ENCODE measurements at regions of chr12 and their contacts with region 1.

Region 1: DNA sequence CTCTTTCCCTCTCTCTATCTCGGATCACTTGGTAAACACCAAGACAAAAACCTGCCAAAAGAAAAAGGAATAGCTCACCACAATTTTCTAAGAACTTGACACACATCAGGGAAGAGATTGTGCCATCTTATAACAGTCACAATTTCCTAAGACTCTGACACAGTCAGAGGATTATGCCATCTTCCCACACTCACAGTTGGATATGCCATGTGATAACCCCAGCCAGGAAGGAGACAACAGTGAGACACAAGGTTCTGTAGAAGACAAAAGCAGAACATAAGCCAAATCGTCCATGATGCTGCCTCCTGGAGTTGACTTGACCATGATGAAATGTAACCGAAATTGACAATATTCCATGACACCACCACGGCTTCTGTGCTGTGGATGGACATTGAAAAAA is 2.8 kb upstream of the CLEC9A start:
- DNase-seq: peak; percentile 96 to 99 (median 98)
- H3K4me3 ChIP-seq: peak overlapping the region in 1 of 3 experiments; percentile 54
- H3K4me3 Mint-ChIP-seq: peak overlapping the region; percentile 68 to 87
- H3K27ac ChIP-seq: peak overlapping the region; percentile 74 to 82
- H3K27ac Mint-ChIP-seq: peak overlapping the region; percentile 97 to 100 (median 99)
- H3K4me1 ChIP-seq: peaks cover 24 to 31% of the 10 kb centered on the region in 2 donors
- H3K4me1 Mint-ChIP-seq: peaks cover 35% of the 10 kb centered on the region
- H3K27me3 ChIP-seq: no peaks in the 10 kb centered on the region
- H3K27me3 Mint-ChIP-seq: peaks cover 0 to 2% (median 0%) of the 10 kb centered on the region in 3 donors
- CTCF ChIP-seq: peak; percentile 23

Region 2: DNA sequence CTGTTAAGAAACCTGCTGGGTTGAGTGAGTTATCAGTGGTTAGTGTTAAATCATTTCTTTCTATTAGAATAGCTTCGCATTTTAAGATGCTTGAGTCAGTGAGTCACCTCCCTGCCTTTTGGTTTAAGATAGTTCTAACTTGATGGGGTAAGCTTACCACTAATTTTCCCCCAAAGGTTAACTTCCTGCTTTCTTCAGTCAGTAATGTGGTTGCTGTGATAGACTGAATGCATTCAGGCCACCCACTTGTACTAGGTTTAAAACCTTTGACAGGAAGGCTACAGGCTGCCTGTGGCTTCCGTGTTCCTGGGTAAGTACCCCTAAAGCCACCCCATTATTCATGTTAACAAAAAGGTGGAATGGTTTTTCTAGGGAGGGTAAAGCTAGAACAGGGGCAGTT is 120.8 kb before region 1 on chr12:
- intact Hi-C with region 1: no loop called
- DNase-seq: peak in 2 of 3 donors; percentile 6 to 14
- H3K4me3 ChIP-seq: no peak overlapping the region
- H3K4me3 Mint-ChIP-seq: no peak overlapping the region
- H3K27ac ChIP-seq: no peak overlapping the region
- H3K27ac Mint-ChIP-seq: no peak overlapping the region
- H3K4me1 ChIP-seq: no peaks in the 10 kb centered on the region
- H3K4me1 Mint-ChIP-seq: no peaks in the 10 kb centered on the region
- H3K27me3 ChIP-seq: no peaks in the 10 kb centered on the region
- H3K27me3 Mint-ChIP-seq: peaks cover 0 to 7% (median 3%) of the 10 kb centered on the region in 3 donors
- CTCF ChIP-seq: no peak

Region 3: GRCh38 chr12:9971181-9971580 is 56.5 kb before region 1 on chr12 and contains the start of gene CLEC12A:
- intact Hi-C with region 1: loop called (anchors 5 to 10 kb)
- DNase-seq: peak; percentile 55 to 73 (median 62)
- H3K4me3 ChIP-seq: peak within 1 kb of the TSS; percentile 86 to 100 (median 98)
- H3K4me3 Mint-ChIP-seq: peak within 1 kb of the TSS; percentile 80 to 100
- H3K27ac ChIP-seq: peak within 1 kb of the TSS in 1 of 2 donors; percentile 84
- H3K27ac Mint-ChIP-seq: peak within 1 kb of the TSS; percentile 88 to 95 (median 93)
- H3K4me1 ChIP-seq: peaks cover 43 to 60% of the 10 kb centered on the region in 2 donors
- H3K4me1 Mint-ChIP-seq: peaks cover 65% of the 10 kb centered on the region
- H3K27me3 ChIP-seq: no peaks in the 10 kb centered on the region
- H3K27me3 Mint-ChIP-seq: peaks cover 0 to 2% (median 0%) of the 10 kb centered on the region in 3 donors
- CTCF ChIP-seq: no peak
- polyA plus RNA-seq, gene CLEC12A: 356 to 441 (median 412) TPM

Region 4: DNA sequence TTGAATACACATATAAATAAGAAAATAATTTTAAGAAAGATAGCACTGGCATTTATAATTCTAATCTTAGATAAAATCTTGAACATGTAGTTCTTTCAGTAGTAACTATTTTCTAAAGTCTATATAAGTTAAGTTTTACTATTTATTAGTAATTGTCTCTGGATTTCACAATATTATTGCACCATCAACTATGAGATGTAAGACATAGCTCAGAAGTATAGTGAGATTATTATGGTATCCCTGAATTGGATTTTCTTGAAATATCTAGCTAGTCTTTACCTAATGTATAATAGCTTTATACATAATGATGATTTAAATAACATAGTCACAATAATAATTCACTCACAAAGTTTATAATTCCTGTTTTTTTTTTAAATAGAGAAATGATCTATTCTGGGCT is 49.8 kb before region 1 on chr12:
- intact Hi-C with region 1: loop called (anchors 5 to 10 kb)
- DNase-seq: peak; percentile 25 to 75 (median 58)
- H3K4me3 ChIP-seq: peak overlapping the region in 2 of 3 experiments; percentile 4 to 98
- H3K4me3 Mint-ChIP-seq: peak overlapping the region in 1 of 2 donors; percentile 36
- H3K27ac ChIP-seq: peak overlapping the region in 1 of 2 donors; percentile 34
- H3K27ac Mint-ChIP-seq: peak overlapping the region in 5 of 7 donors; percentile 53 to 77 (median 67)
- H3K4me1 ChIP-seq: peaks cover 58 to 79% of the 10 kb centered on the region in 2 donors
- H3K4me1 Mint-ChIP-seq: peaks cover 73% of the 10 kb centered on the region
- H3K27me3 ChIP-seq: no peaks in the 10 kb centered on the region
- H3K27me3 Mint-ChIP-seq: no peaks in the 10 kb centered on the region
- CTCF ChIP-seq: no peak

Region 5: GRCh38 chr12:10069099-10069498 is 41.4 kb after region 1 on chr12:
- intact Hi-C with region 1: loop called (anchors 5 kb)
- DNase-seq: peak; percentile 71 to 82 (median 81)
- H3K4me3 ChIP-seq: peak overlapping the region; percentile 17 to 55 (median 29)
- H3K4me3 Mint-ChIP-seq: peak overlapping the region; percentile 32 to 81
- H3K27ac ChIP-seq: peak overlapping the region; percentile 63 to 95
- H3K27ac Mint-ChIP-seq: peak overlapping the region; percentile 96 to 99 (median 97)
- H3K4me1 ChIP-seq: peaks cover 43 to 48% of the 10 kb centered on the region in 2 donors
- H3K4me1 Mint-ChIP-seq: peaks cover 54% of the 10 kb centered on the region
- H3K27me3 ChIP-seq: no peaks in the 10 kb centered on the region
- H3K27me3 Mint-ChIP-seq: peaks cover 0 to 2% (median 0%) of the 10 kb centered on the region in 3 donors
- CTCF ChIP-seq: no peak

Region 6: GRCh38 chr12:10212201-10213131 is 184.7 kb after region 1 on chr12 and contains the start of gene GABARAPL1:
- intact Hi-C with region 1: loop called in 1 of 2 experiments (anchors 10 kb)
- DNase-seq: peak; percentile 98 to 99 (median 99)
- H3K4me3 ChIP-seq: peak within 1 kb of the TSS; percentile 88 to 95 (median 94)
- H3K4me3 Mint-ChIP-seq: peak within 1 kb of the TSS; percentile 96 to 99
- H3K27ac ChIP-seq: peak within 1 kb of the TSS; percentile 99 to 100
- H3K27ac Mint-ChIP-seq: peak within 1 kb of the TSS; percentile 99 to 100 (median 99)
- H3K4me1 ChIP-seq: peaks cover 18 to 25% of the 10 kb centered on the region in 2 donors
- H3K4me1 Mint-ChIP-seq: peaks cover 17% of the 10 kb centered on the region
- H3K27me3 ChIP-seq: no peaks in the 10 kb centered on the region
- H3K27me3 Mint-ChIP-seq: peaks cover 1 to 6% (median 3%) of the 10 kb centered on the region in 3 donors
- CTCF ChIP-seq: no peak
- polyA plus RNA-seq, gene GABARAPL1: 13.1 to 291 (median 15.5) TPM